Activated CD4-positive, alpha-beta memory T cell treated with anti-CD3 and anti-CD28 coated beads for 36 hours (primary cell): ENCODE measurements at regions of chr4 and their contacts with region 1.

Region 1: DNA sequence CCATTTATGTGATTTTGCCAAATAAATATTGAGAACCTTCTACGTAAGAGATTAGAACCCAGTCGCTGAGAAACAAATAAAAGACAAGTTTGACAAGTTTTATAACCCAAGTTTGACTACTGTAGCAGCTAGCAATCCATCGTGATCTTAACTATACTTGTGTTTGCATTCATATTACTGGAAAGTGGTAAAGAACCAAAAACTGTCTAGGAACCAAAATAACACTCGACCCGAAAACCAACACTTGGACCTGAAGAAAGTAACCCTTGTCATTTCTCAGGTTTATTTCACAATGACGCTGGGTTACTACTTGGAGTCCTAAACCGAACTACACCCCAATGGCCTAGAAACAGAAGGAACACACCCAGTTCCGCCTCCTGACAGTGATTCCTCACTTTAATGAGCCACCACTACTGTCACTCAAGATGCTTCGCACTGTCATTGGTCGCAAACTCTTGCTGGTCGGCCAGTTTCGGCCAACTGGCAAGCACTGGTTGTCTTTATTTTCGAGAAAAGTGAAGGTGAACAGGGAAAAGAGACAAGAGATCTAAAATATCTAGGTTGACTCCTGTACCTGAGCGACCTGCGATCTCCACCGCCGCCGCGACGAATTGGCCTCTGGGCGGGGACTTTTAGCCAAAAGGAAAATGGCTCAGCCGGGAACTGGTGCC is 496 bp downstream of the FBXO8 start:
- DNase-seq: peak; percentile 86
- H3K4me3 Mint-ChIP-seq: peak overlapping the region; percentile 97
- H3K27ac Mint-ChIP-seq: peak overlapping the region; percentile 99
- H3K4me1 Mint-ChIP-seq: peaks cover 62% of the 10 kb centered on the region
- H3K27me3 Mint-ChIP-seq: no peaks in the 10 kb centered on the region

Region 2: GRCh38 chr4:173370477-173371291 is 912.3 kb before region 1 on chr4 and contains the start of gene SAP30:
- CTCF ChIA-PET with region 1: no interaction called
- POLR2A ChIA-PET with region 1: no interaction called
- intact Hi-C with region 1: loop called (anchors 1 kb)
- DNase-seq: peak; percentile 99
- H3K4me3 Mint-ChIP-seq: peak within 1 kb of the TSS; percentile 100
- H3K27ac Mint-ChIP-seq: peak within 1 kb of the TSS; percentile 99
- H3K4me1 Mint-ChIP-seq: peaks cover 33% of the 10 kb centered on the region
- H3K27me3 Mint-ChIP-seq: peaks cover 4% of the 10 kb centered on the region
- total RNA-seq, gene SAP30: 26.1 to 26.5 TPM

Region 3: DNA sequence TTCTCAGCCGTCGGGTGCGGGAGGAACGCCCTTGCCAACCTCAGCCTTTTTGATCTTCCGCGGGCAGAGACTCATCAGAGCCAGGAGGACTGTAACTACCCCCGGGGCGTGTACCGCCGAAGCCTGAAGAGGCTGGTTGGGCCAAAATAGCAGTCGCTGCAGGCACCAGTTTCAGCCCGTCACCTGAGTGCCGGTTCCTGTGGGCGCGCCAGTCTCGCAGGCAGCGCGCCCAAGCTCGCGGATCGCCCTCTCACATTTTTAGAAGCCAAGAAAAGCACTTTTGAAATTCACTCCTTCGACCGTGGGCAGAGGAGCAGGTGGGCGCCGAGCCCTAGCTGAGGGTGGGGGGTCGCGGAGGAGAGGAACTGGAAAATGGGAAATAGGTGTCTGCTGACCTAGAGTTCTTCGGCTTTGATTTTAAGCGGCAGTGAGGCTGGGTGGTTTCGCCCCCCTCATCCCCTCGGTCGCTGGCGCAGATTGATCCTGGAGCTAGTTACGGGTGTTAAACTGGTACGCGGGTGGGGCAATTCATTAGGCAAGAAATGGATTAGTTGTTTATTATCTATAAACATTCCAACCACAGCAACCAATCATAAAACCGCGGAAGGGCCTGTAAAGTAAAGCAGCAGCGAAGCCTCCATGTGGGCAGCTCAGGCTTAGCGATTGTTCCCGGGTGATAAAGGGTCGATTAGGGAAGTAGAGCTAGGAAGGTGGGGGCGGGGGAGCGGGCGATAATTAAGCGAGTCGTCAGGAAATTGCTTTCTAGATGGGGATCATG is 68.7 kb before region 1 on chr4:
- CTCF ChIA-PET with region 1: no interaction called
- POLR2A ChIA-PET with region 1: no interaction called
- intact Hi-C with region 1: loop called (anchors 2 kb)
- DNase-seq: peak; percentile 53
- H3K4me3 Mint-ChIP-seq: peak overlapping the region; percentile 47
- H3K27ac Mint-ChIP-seq: no peak overlapping the region
- H3K4me1 Mint-ChIP-seq: peaks cover 43% of the 10 kb centered on the region
- H3K27me3 Mint-ChIP-seq: peaks cover 84% of the 10 kb centered on the region

Region 4: DNA sequence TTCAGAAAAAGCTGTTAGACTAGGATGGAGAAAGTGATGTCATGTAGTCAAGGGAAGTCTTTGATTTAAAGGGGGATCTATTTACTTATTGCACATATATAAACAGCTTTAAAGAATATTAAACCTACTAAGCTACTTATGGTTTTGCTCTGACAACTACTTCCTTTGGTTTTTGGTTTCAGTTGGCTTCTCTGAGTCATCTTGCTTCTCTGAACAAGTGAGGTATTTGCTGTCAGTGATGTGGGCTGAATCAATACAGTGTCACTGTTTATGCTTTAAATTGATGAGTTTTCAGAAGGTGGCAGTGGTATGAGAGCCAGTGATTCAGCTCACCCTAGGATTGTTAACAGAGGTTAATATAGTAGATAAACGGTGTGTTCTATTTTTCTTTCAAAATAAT is 75.9 kb after region 1 on chr4:
- CTCF ChIA-PET with region 1: no interaction called
- POLR2A ChIA-PET with region 1: no interaction called
- intact Hi-C with region 1: loop called (anchors 1 kb)
- DNase-seq: no peak
- H3K4me3 Mint-ChIP-seq: no peak overlapping the region
- H3K27ac Mint-ChIP-seq: no peak overlapping the region
- H3K4me1 Mint-ChIP-seq: peaks cover 5% of the 10 kb centered on the region
- H3K27me3 Mint-ChIP-seq: peaks cover 16% of the 10 kb centered on the region